ENCODE measurements at regions of chr18 and their contacts with region 1.

Region 1: GRCh38 chr18:71815305-71815704 is 728.8 kb downstream of the CBLN2 start:
- DNase-seq: no peak
- ATAC-seq: no peak

Region 2: GRCh38 chr18:71784777-71785176 is 30.5 kb before region 1 on chr18:
- intact Hi-C with region 1: no loop called
- DNase-seq: no peak
- ATAC-seq: no peak

Region 3: DNA sequence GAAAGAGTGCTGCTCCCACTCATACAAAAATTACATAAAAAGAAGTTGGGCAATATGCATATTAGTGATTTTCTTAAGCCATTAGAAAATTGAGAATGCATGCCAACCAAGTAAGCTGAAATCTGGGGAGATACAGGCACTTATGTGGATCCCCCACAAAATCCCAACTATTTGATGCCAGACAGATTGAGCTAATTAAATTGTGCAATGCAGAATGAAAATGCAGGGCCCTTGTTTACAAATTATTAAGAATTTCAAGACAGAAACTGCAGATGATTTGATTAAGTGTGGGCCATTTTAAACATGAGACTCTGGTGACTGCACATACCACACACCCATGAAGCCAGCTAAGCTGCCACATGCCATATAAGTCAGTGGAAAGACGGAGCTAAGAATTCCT is 174.3 kb after region 1 on chr18:
- intact Hi-C with region 1: loop called (anchors 5 kb)
- DNase-seq: no peak
- ATAC-seq: no peak

Region 4: GRCh38 chr18:72261590-72261989 is 446.3 kb after region 1 on chr18:
- intact Hi-C with region 1: no loop called
- DNase-seq: no peak
- ATAC-seq: no peak

Measured in Right ventricle myocardium inferior (tissue), 1 donor.